Caco-2 (cell line): ENCODE measurements at regions of chr15 and their contacts with region 1.

Region 1: DNA sequence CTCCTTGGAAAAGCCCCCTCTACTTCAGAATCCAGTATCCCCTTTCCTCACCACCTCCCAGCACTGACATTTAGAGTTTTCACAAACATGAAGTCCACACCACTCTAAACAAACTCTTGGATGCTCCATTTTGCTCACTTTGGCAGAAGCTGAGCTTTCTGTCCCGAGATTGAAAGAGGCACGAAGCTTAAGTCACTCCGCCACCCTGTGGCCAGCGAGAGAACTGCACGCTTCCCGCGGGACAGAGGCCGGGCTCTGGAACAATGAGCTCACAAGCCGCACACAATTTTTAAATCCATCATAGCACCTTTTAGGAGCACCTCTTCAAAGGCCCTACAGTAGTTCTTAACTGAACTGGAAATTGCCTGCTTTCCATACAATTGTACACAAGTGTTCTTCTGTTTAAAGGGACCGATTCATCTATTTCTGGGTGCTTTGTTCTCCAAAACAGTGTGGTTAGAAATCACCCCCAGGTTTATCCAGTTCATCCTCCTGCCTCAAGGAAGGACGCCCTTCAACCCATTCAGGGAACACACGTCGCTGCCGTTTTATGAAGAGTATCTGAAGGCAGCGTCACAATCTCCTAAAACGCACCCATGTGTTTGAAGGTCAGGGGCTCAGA is 226.1 kb downstream of the VPS13C start:
- DNase-seq: peak; percentile 59 to 80
- H3K4me3 ChIP-seq: no peak overlapping the region
- H3K4me3 Mint-ChIP-seq: no peak overlapping the region
- H3K27ac Mint-ChIP-seq: no peak overlapping the region
- H3K4me1 ChIP-seq: no peaks in the 10 kb centered on the region
- H3K4me1 Mint-ChIP-seq: no peaks in the 10 kb centered on the region
- H3K27me3 ChIP-seq: no peaks in the 10 kb centered on the region
- H3K27me3 Mint-ChIP-seq: peaks cover 3% of the 10 kb centered on the region
- CTCF ChIP-seq: peak; percentile 88 to 91

Region 2: DNA sequence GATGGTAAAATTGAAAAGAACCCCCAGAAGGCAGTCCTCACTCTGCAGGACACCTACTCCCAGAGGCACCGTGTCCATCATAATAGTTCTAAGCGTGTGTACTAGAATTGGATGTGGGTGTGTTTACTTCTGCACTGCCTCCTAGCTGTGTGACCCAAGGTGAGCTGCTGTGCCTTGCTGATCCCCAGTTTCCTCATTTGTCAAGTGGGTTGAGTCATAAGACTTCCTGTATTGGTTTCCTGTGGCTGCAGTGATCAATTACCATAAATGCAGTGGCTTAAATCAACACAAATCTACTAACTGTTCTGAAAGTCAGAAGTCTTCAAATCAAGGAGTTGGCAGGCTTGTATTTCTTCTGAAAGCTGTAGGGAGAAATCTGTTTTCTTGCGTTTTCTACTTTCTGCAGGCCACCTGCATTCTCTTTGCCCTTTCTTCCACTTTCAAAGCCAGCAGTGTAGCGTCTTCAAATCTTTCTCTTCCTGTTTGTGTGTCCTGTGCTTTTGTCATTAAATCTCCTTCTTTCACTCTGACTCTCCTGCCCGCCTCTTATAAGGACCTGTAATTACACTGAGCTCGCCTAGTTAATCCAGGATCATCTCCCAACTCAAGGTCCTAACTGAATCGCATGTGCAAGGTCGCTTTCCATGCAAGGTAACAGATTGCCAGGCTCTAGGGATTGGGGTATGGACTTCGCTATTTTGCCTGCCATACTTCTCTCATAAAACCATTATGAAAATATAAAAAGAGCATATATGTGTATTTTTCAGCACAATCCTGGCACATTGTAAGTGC is 664.1 kb before region 1 on chr15:
- CTCF ChIA-PET with region 1: interaction called, 12 read pairs
- POLR2A ChIA-PET with region 1: no interaction called
- intact Hi-C with region 1: loop called (anchors 1 kb)
- DNase-seq: no peak
- H3K4me3 ChIP-seq: no peak overlapping the region
- H3K4me3 Mint-ChIP-seq: no peak overlapping the region
- H3K27ac Mint-ChIP-seq: no peak overlapping the region
- H3K4me1 ChIP-seq: no peaks in the 10 kb centered on the region
- H3K4me1 Mint-ChIP-seq: no peaks in the 10 kb centered on the region
- H3K27me3 ChIP-seq: no peaks in the 10 kb centered on the region
- H3K27me3 Mint-ChIP-seq: peaks cover 3% of the 10 kb centered on the region
- CTCF ChIP-seq: no peak

Region 3: GRCh38 chr15:61195116-61196002 is 638.8 kb before region 1 on chr15:
- CTCF ChIA-PET with region 1: interaction called, 15 read pairs
- POLR2A ChIA-PET with region 1: no interaction called
- intact Hi-C with region 1: loop called (anchors 10 kb)
- DNase-seq: peak; percentile 34 to 47
- H3K4me3 ChIP-seq: no peak overlapping the region
- H3K4me3 Mint-ChIP-seq: no peak overlapping the region
- H3K27ac Mint-ChIP-seq: no peak overlapping the region
- H3K4me1 ChIP-seq: no peaks in the 10 kb centered on the region
- H3K4me1 Mint-ChIP-seq: peaks cover 6% of the 10 kb centered on the region
- H3K27me3 ChIP-seq: no peaks in the 10 kb centered on the region
- H3K27me3 Mint-ChIP-seq: peaks cover 4% of the 10 kb centered on the region
- CTCF ChIP-seq: peak; percentile 58 to 62

Region 4: DNA sequence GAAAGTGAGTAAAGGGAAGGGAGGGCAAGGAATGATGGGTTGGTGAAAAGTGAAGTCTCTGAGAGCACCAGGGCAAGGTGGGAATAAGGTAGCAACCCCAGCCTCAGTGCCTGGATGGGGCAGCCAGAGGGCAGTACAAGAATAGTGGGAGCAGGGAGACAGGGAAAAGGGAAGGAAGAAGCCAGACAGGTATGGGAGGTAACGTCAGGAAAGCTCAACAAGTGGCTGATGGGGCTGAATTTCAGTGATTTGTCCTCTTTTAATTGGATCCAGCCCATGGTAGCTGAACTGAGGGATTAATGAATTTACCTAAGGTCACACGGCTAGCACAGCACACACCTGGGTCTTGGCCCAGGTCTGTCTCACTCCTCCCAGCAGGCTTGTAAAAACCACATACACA is 617.7 kb before region 1 on chr15:
- CTCF ChIA-PET with region 1: interaction called, 6 read pairs
- POLR2A ChIA-PET with region 1: no interaction called
- intact Hi-C with region 1: loop called (anchors 2 kb)
- DNase-seq: peak in 1 of 2 experiments; percentile 20
- H3K4me3 ChIP-seq: no peak overlapping the region
- H3K4me3 Mint-ChIP-seq: no peak overlapping the region
- H3K27ac Mint-ChIP-seq: no peak overlapping the region
- H3K4me1 ChIP-seq: no peaks in the 10 kb centered on the region
- H3K4me1 Mint-ChIP-seq: no peaks in the 10 kb centered on the region
- H3K27me3 ChIP-seq: no peaks in the 10 kb centered on the region
- H3K27me3 Mint-ChIP-seq: peaks cover 28% of the 10 kb centered on the region
- CTCF ChIP-seq: peak in 1 of 2 experiments; percentile 48

Region 5: DNA sequence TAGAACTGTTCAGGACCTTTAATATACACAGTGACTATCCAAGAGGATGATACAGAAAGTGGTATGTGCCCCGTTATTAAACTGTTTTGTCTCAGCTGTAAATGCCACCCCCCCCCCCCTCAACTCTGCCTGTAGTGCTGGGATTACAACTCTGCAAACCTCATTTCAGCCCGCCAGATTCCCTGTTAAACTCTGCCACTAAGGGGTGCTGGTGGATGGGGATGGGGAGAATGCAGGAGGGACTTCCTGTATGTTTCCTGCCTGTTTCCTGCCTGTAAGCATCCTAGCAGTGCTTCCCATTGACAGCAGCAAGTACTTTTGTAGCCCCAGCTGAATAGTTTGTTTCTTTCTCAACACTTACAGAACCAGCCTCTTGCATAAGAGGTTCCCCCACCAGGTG is 303.4 kb before region 1 on chr15:
- CTCF ChIA-PET with region 1: interaction called, 3 read pairs
- POLR2A ChIA-PET with region 1: no interaction called
- intact Hi-C with region 1: loop called (anchors 10 kb)
- DNase-seq: no peak
- H3K4me3 ChIP-seq: no peak overlapping the region
- H3K4me3 Mint-ChIP-seq: no peak overlapping the region
- H3K27ac Mint-ChIP-seq: no peak overlapping the region
- H3K4me1 ChIP-seq: no peaks in the 10 kb centered on the region
- H3K4me1 Mint-ChIP-seq: no peaks in the 10 kb centered on the region
- H3K27me3 ChIP-seq: no peaks in the 10 kb centered on the region
- H3K27me3 Mint-ChIP-seq: peaks cover 7% of the 10 kb centered on the region
- CTCF ChIP-seq: peak in 1 of 2 experiments; percentile 18

Region 6: DNA sequence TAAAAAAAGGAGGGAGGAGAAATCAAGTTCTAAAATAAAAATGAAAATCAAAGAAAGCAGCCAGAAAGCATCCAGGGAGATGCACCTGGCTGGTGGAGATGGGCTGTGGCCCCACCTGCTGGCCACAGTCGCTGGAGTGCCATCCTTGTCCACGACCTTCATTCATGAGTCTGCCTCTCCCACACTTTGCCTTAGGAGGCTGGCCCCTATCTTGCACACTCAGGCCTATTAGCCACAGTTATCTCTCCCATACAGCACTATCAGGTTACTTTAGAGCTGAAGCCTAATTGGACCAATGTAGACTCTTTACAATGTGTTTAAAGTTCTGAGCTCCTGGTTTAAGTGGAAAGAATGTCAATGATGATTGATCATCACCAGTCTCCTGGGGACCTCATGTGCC is 213.0 kb before region 1 on chr15:
- CTCF ChIA-PET with region 1: no interaction called
- POLR2A ChIA-PET with region 1: no interaction called
- intact Hi-C with region 1: loop called (anchors 10 kb)
- DNase-seq: peak; percentile 45 to 50
- H3K4me3 ChIP-seq: no peak overlapping the region
- H3K4me3 Mint-ChIP-seq: no peak overlapping the region
- H3K27ac Mint-ChIP-seq: no peak overlapping the region
- H3K4me1 ChIP-seq: no peaks in the 10 kb centered on the region
- H3K4me1 Mint-ChIP-seq: no peaks in the 10 kb centered on the region
- H3K27me3 ChIP-seq: no peaks in the 10 kb centered on the region
- H3K27me3 Mint-ChIP-seq: peaks cover 9% of the 10 kb centered on the region
- CTCF ChIP-seq: peak; percentile 47 to 64

Region 7: DNA sequence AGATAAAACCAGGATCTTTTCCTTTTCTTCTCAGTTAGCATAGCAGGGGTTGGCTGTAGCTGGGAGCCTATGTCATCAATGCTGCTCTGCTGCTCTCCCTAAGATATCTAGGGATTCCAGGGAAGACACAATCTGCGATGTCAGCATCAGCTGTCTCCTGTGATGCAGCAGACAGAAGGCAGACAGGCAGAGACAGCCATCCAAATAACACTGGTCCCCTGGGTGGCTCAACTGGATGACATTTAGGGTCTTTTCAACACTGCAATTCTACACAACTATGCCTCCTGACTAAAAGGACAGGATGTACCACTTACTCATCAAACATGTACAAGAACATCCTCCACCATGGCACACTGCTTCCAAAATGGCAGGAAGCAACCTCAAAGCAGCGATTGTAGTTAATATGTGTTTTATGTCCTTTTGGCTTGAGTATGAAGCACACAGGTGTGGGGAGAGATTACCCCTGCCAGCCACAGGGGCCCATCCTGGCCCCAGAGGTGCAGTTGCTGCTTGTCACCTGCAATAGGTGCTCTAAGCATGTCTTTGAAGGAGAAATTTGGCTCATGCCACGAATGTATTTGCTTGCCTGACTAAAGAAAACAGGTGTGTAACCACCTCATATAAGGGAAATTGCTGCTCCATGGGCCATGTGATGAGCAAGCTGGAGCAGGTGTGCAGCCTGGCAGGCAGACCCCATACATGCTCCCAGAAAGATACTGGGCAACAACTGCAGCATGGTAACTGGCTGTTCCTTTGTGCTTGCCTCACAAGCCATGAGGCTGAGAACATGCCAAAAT is 131.8 kb before region 1 on chr15:
- CTCF ChIA-PET with region 1: interaction called, 3 read pairs
- POLR2A ChIA-PET with region 1: no interaction called
- intact Hi-C with region 1: loop called (anchors 1 kb)
- DNase-seq: no peak
- H3K4me3 ChIP-seq: no peak overlapping the region
- H3K4me3 Mint-ChIP-seq: no peak overlapping the region
- H3K27ac Mint-ChIP-seq: no peak overlapping the region
- H3K4me1 ChIP-seq: no peaks in the 10 kb centered on the region
- H3K4me1 Mint-ChIP-seq: no peaks in the 10 kb centered on the region
- H3K27me3 ChIP-seq: no peaks in the 10 kb centered on the region
- H3K27me3 Mint-ChIP-seq: peaks cover 4% of the 10 kb centered on the region
- CTCF ChIP-seq: peak in 1 of 2 experiments; percentile 3